ENCODE measurements at regions of chr21 and their contacts with region 1.

Region 1: DNA sequence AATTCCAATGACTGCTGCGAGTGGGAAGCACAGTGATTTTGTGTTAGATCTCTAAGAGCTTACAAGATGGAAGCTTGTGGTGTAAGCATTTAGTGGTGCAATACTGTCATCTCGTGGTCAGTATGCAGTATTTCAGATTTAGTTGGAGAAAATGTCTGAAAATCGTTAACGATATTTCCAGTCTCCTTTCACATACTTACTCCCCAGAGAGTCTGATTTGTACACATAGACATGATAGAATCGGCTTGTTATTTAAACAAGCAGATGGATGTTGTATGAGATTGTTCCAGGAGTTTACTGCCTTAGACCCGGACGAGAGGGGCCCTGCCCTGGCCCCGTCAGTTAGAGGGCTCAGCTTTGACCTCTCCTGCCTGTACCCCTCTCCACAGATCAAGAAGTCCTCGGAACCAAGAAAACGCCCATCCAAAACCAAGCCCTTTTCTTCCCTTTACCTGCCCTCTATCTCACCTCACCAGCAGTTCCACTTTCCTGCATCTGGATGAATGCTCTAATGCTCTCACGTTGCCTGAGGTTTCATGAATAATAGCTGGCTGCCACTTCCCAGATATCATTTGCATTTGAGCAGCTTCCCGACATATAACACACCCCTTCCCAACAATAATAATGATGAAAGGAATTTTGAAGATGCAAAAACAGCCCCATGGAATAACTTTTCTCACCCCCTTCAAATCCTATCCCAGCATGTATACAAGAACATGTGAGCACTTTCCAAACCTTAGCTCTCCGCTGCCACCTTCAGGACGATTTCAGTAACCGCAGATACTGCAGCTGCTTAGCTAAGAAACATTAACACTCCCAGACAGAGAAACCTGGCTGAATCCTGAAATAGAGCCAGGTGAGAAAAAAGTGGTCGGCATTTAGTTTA is 247.3 kb downstream of the LTN1 start:
- DNase-seq: peak; percentile 61
- H3K27ac ChIP-seq: no peak overlapping the region
- CTCF ChIP-seq: peak; percentile 82

Region 2: GRCh38 chr21:28516991-28517592 is 228.3 kb before region 1 on chr21:
- CTCF ChIA-PET with region 1: interaction called, 12 read pairs
- POLR2A ChIA-PET with region 1: no interaction called
- DNase-seq: peak; percentile 15
- H3K27ac ChIP-seq: no peak overlapping the region
- CTCF ChIP-seq: no peak; the same call in 1 of the 2 replicates

Region 3: DNA sequence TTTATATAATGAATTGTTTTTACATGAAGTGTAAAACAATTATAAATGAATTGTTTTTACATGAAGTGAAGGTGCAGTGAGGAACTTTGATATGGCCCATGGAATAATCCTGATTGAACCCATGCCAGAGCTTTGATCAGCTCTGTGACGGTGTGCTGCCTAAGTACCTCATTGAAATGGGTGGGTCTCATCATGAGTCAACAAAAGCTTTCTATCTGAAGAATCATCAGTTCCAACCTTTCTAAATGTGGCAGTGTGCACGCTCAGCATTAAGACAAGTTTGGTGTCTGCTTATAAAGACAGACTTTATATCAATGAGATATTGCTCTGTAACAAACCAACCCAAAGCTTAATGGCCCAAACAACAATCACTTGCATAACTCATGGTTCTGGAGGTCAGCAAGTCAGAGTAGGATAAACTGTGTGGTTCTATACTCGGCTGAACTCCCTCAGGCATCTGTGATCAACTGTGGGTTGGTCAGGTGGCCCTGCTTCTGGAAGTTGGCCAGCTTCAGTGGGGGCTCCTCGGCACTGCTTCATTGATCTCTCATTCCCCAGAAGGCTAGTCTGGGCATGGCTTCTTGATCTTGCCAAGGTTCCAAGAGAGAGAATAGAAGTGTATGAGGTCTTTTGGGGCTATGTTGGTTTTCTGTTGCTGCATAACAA is 10.7 kb before region 1 on chr21:
- CTCF ChIA-PET with region 1: interaction called, 15 read pairs
- POLR2A ChIA-PET with region 1: no interaction called
- DNase-seq: no peak
- H3K27ac ChIP-seq: no peak overlapping the region
- CTCF ChIP-seq: no peak

Measured in RWPE1 (cell line).